ENCODE measurements at regions of chr13 and their contacts with region 1.

Region 1: DNA sequence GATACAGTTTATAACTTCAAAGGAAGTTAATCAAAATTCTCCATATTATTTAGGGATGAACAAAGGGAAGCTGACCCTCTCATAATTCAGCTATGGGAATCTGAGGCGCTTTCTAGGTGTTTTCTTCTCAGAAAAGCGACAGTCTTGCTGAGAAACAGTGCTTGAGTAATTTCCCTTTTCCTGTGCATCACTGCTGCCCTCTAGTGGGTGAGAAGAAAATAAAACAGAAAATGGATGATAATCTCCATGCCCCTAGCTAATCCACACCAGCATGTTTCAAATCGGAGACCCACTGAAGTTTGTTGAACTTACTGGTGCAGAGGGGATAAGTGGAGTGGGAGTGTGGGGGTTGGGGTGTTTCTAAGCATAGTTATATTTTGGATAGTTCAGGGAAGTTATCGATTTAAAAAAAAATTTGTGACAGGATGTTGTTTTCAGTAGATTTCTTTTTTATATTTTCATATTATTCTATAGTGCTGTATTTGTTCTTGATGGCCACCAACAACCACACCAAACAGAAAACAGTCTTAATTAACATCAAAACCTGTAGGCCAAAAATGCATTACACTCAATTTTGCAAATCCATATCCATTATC is 21.4 kb downstream of the LCP1 start:
- DNase-seq: peak in 1 of 2 donors; percentile 31
- ATAC-seq: peak in 6 of 8 donors; percentile 39 to 61 (median 49)
- H3K4me3 ChIP-seq: no peak overlapping the region
- H3K27ac ChIP-seq: peak overlapping the region in 1 of 10 donors; percentile 33
- H3K4me1 ChIP-seq: peaks cover 0 to 39% (median 0%) of the 10 kb centered on the region in 9 donors
- H3K27me3 ChIP-seq: peaks cover 0 to 7% (median 0%) of the 10 kb centered on the region in 7 donors
- CTCF ChIP-seq: peak; percentile 53 to 86 (median 79)

Region 2: DNA sequence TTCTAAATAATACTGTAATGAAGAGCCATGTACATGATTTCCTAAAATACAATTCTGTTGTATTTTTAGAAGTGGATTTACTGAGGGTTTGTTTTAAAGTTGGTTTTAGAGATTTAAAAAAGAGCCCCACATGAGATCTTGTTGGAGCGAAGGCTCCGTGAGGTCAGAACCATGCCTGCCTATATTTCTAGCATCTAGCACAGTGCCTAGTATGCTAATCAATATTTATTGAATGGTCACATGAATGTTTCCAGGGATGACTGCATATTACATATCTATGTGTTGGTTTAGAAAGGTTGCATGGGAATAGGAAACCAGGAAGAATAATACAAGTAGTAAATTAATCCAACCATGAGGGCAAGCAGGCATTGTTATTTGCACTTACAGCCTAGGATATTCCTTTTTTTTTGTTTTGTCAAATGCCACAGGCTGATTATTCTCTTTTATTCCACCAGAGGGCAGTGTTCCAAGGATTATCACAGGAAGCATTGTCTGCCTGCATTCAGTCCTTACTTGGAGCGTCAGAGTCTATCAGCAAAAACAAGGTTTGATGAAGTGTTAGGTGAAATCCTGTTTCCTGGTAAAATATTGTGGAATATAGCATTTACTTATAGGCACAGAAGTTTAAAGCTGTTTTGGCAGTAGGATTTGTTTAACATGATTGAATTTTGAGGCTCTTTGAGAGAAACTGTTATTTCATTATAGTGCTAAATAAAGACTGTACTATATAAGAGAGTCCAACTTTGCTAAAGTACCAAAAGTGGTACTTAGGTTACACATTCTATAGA is 649.1 kb before region 1 on chr13:
- intact Hi-C with region 1: loop called in 2 of 10 experiments (anchors 5 to 10 kb)
- DNase-seq: peak in 1 of 2 donors; percentile 25
- ATAC-seq: peak in 7 of 8 donors; percentile 52 to 72 (median 66)
- H3K4me3 ChIP-seq: no peak overlapping the region
- H3K27ac ChIP-seq: peak overlapping the region in 1 of 10 donors; percentile 21
- H3K4me1 ChIP-seq: peaks cover 0 to 8% (median 0%) of the 10 kb centered on the region in 9 donors
- H3K27me3 ChIP-seq: no peaks in the 10 kb centered on the region
- CTCF ChIP-seq: peak; percentile 75 to 93 (median 89)

Region 3: GRCh38 chr13:46031581-46032263 is 128.8 kb before region 1 on chr13:
- intact Hi-C with region 1: no loop called
- DNase-seq: no peak
- ATAC-seq: no peak
- H3K4me3 ChIP-seq: no peak overlapping the region
- H3K27ac ChIP-seq: no peak overlapping the region
- H3K4me1 ChIP-seq: no peaks in the 10 kb centered on the region
- H3K27me3 ChIP-seq: no peaks in the 10 kb centered on the region
- CTCF ChIP-seq: no peak

Region 4: GRCh38 chr13:46278474-46278873 is 117.9 kb after region 1 on chr13:
- intact Hi-C with region 1: no loop called
- DNase-seq: no peak
- ATAC-seq: no peak
- H3K4me3 ChIP-seq: no peak overlapping the region
- H3K27ac ChIP-seq: no peak overlapping the region
- H3K4me1 ChIP-seq: no peaks in the 10 kb centered on the region
- H3K27me3 ChIP-seq: peaks cover 0 to 4% (median 0%) of the 10 kb centered on the region in 7 donors
- CTCF ChIP-seq: no peak

Region 5: DNA sequence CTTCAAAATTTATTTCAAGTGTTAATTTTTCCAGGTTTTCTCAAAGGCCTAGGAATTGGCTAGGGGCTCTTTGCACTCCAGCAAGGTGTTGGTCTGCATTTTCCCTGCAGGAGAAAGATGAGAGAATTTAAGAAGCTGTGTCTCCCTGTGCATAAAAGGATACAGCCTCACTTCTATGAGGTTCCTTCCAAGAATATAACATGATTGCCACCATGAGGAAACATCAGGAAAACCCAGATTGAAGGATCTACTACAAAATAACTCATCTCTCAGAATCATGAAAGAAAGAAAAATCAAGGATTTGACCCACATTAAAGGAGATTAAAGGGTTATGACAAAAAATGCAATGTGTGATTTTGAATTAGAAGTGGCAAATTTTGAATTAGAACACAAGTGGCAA is 156.6 kb after region 1 on chr13:
- intact Hi-C with region 1: loop called in 1 of 10 experiments (anchors 10 kb)
- DNase-seq: no peak
- ATAC-seq: no peak
- H3K4me3 ChIP-seq: no peak overlapping the region
- H3K27ac ChIP-seq: no peak overlapping the region
- H3K4me1 ChIP-seq: peaks cover 0 to 34% (median 0%) of the 10 kb centered on the region in 9 donors
- H3K27me3 ChIP-seq: peaks cover 0 to 13% (median 0%) of the 10 kb centered on the region in 7 donors
- CTCF ChIP-seq: no peak

Measured in heart right ventricle (tissue), 16 donors.